Heart left ventricle (tissue), 16 donors: ENCODE measurements at regions of chr3 and their contacts with region 1.

Region 1: GRCh38 chr3:119810018-119810435 is 28.1 kb downstream of the NR1I2 start:
- DNase-seq: peak in 4 of 5 donors; percentile 22 to 77 (median 38)
- ATAC-seq: peak in 3 of 4 donors; percentile 57 to 60 (median 58)
- H3K4me3 ChIP-seq: peak overlapping the region; percentile 31 to 64 (median 50)
- H3K27ac ChIP-seq: peak overlapping the region in 1 of 12 donors; percentile 24
- H3K4me1 ChIP-seq: peaks cover 0 to 22% (median 8%) of the 10 kb centered on the region in 12 donors
- H3K27me3 ChIP-seq: peaks cover 0 to 7% (median 0%) of the 10 kb centered on the region in 9 donors
- CTCF ChIP-seq: peak in 4 of 12 donors; percentile 10 to 33 (median 26)
- POLR2A ChIP-seq: no peak

Region 2: GRCh38 chr3:119716998-119717397 is 93.0 kb before region 1 on chr3:
- intact Hi-C with region 1: loop called in 1 of 10 experiments (anchors 10 kb)
- DNase-seq: no peak
- ATAC-seq: peak in 3 of 4 donors; percentile 44 to 62 (median 59)
- H3K4me3 ChIP-seq: no peak overlapping the region
- H3K27ac ChIP-seq: no peak overlapping the region
- H3K4me1 ChIP-seq: peaks cover 0 to 8% (median 0%) of the 10 kb centered on the region in 12 donors
- H3K27me3 ChIP-seq: no peaks in the 10 kb centered on the region
- CTCF ChIP-seq: no peak
- POLR2A ChIP-seq: no peak

Region 3: GRCh38 chr3:119912220-119912619 is 102.2 kb after region 1 on chr3:
- intact Hi-C with region 1: no loop called
- DNase-seq: no peak
- ATAC-seq: no peak
- H3K4me3 ChIP-seq: no peak overlapping the region
- H3K27ac ChIP-seq: no peak overlapping the region
- H3K4me1 ChIP-seq: peaks cover 0 to 32% (median 5%) of the 10 kb centered on the region in 12 donors
- H3K27me3 ChIP-seq: no peaks in the 10 kb centered on the region
- CTCF ChIP-seq: no peak
- POLR2A ChIP-seq: no peak

Region 4: GRCh38 chr3:119924111-119925094 is 114.4 kb after region 1 on chr3:
- intact Hi-C with region 1: no loop called
- DNase-seq: no peak
- ATAC-seq: no peak
- H3K4me3 ChIP-seq: no peak overlapping the region
- H3K27ac ChIP-seq: no peak overlapping the region
- H3K4me1 ChIP-seq: peaks cover 0 to 11% (median 0%) of the 10 kb centered on the region in 12 donors
- H3K27me3 ChIP-seq: no peaks in the 10 kb centered on the region
- CTCF ChIP-seq: no peak
- POLR2A ChIP-seq: no peak